A673 (cell line): ENCODE measurements at regions of chr7 and their contacts with region 1.

Region 1: GRCh38 chr7:142782922-142783900 is 12.4 kb downstream of the PRSS2 start:
- DNase-seq: peak; percentile 93
- H3K4me3 ChIP-seq: no peak overlapping the region
- H3K27ac ChIP-seq: no peak overlapping the region
- H3K4me1 ChIP-seq: no peaks in the 10 kb centered on the region
- H3K27me3 ChIP-seq: peaks cover 10% of the 10 kb centered on the region
- CTCF ChIP-seq: peak; percentile 97

Region 2: GRCh38 chr7:142535123-142535779 is 248.0 kb before region 1 on chr7:
- CTCF ChIA-PET with region 1: interaction called, 24 read pairs
- POLR2A ChIA-PET with region 1: no interaction called
- intact Hi-C with region 1: loop called (anchors 2 kb)
- DNase-seq: peak; percentile 80
- H3K4me3 ChIP-seq: no peak overlapping the region
- H3K27ac ChIP-seq: no peak overlapping the region
- H3K4me1 ChIP-seq: no peaks in the 10 kb centered on the region
- H3K27me3 ChIP-seq: peaks cover 21% of the 10 kb centered on the region
- CTCF ChIP-seq: peak; percentile 84

Region 3: DNA sequence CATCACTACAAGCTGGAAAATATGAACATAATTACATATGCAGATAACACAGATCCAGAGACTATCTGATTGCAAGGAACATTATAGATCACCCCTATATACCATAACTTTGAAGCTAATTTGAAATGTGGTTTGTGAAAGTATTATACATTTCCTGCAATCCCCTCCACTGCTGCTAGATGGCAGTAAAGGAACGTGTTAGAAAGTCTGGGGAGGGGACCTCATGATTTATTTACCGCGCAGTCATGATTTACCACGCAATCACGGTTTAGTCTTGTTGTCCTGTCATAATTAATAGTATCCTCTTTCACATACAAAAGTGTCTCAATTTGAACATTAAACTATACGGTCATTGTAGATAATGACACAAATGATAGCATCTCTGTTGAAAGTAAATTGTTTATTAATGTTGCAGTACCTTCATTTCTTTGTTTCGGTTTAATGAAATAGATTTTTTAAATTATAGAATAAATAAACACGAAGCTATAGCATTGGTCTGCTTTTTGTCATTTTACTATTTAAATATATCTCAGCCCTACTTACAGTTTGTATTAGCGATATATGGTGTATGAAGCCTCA is 179.3 kb before region 1 on chr7:
- CTCF ChIA-PET with region 1: interaction called, 22 read pairs
- POLR2A ChIA-PET with region 1: no interaction called
- intact Hi-C with region 1: no loop called
- DNase-seq: peak; percentile 70
- H3K4me3 ChIP-seq: no peak overlapping the region
- H3K27ac ChIP-seq: no peak overlapping the region
- H3K4me1 ChIP-seq: no peaks in the 10 kb centered on the region
- H3K27me3 ChIP-seq: peaks cover 29% of the 10 kb centered on the region
- CTCF ChIP-seq: peak; percentile 85

Region 4: GRCh38 chr7:142632291-142633134 is 150.7 kb before region 1 on chr7:
- CTCF ChIA-PET with region 1: interaction called, 49 read pairs
- POLR2A ChIA-PET with region 1: no interaction called
- intact Hi-C with region 1: loop called (anchors 1 kb)
- DNase-seq: peak; percentile 71
- H3K4me3 ChIP-seq: no peak overlapping the region
- H3K27ac ChIP-seq: no peak overlapping the region
- H3K4me1 ChIP-seq: no peaks in the 10 kb centered on the region
- H3K27me3 ChIP-seq: peaks cover 45% of the 10 kb centered on the region
- CTCF ChIP-seq: peak; percentile 72

Region 5: DNA sequence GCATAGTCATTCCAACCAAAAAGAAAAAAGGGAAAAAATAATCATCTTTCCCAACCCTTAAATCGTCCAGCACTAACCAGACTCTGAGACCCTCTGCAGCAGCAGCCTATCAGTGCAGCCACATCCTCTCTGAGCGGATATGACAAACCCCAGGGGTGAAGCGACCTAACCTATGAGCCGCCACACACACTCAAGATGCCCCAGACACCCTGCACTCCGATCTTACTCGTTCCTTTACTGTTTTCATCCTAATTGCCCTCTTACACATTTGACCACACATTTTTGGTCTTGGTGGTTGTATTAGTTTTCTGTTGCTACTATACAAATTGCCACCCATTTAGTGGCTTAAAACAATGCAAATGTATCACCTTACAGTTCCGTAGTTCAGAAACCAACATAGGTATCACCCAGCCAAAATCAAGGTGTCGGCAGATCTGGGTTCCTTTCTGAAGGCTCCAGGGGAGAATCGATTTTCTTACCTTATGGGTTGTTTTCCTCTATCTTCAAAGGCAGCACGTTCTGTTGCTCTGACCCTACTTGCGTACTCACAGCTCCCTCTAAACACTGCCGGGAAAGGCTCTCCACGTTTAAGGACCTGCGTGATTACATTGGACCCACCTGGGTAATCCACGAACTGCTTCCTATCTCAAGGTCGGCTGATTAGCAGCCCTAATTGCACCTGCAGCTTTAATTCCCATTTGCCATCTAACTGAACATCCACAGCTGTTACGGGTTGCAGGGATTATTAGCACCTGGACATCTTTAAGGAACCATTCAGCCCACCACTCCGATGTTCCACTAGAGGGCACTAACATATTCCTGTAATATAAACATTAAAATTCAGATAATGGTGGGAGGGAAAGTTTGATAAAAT is 71.2 kb before region 1 on chr7:
- CTCF ChIA-PET with region 1: no interaction called
- POLR2A ChIA-PET with region 1: no interaction called
- intact Hi-C with region 1: loop called (anchors 1 kb)
- DNase-seq: peak; percentile 15
- H3K4me3 ChIP-seq: no peak overlapping the region
- H3K27ac ChIP-seq: no peak overlapping the region
- H3K4me1 ChIP-seq: no peaks in the 10 kb centered on the region
- H3K27me3 ChIP-seq: peaks cover 19% of the 10 kb centered on the region
- CTCF ChIP-seq: peak; percentile 73